ENCODE measurements at regions of chr11 and their contacts with region 1.

Region 1: DNA sequence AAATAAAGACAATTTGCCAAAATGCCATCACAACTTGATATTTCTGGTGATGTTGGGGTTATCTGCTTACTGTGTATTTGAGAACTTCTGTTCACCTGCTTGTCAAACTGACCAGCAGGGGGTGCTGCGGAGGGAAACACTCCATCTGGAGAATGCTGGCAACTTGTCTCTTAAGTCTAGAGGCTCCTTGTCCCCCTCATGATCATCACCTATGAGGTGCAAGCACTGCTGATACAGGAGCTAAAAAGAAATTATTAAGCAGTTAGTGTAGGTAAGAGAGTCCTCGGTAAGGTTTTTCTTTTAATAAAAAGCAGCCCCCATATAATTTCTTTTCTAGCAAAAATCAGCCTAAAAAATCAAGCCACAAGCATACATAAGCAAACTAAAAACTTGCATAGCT is 32.7 kb upstream of the GLYATL1B start:
- DNase-seq: no peak
- ATAC-seq: peak; percentile 84
- H3K4me3 ChIP-seq: no peak overlapping the region
- H3K27ac ChIP-seq: no peak overlapping the region
- H3K4me1 ChIP-seq: peaks cover 4% of the 10 kb centered on the region; the same call in 1 of the 2 replicates
- H3K27me3 ChIP-seq: no peaks in the 10 kb centered on the region
- CTCF ChIP-seq: peak; percentile 47 to 75 (median 63)
- EP300 ChIP-seq: no peak
- POLR2A ChIP-seq: no peak
- RAD21 ChIP-seq: peak; percentile 44; the same call in 1 of the 2 replicates

Region 2: GRCh38 chr11:58654079-58654907 is 399.1 kb before region 1 on chr11:
- CTCF ChIA-PET with region 1: interaction called, 5 read pairs
- POLR2A ChIA-PET with region 1: no interaction called
- RAD21 ChIA-PET with region 1: interaction called, 13 read pairs
- SMC1A ChIA-PET with region 1: interaction called, 3 read pairs
- in situ Hi-C with region 1: no loop called
- intact Hi-C with region 1: loop called (anchors 5 kb)
- DNase-seq: peak; percentile 38
- ATAC-seq: peak; percentile 98
- H3K4me3 ChIP-seq: no peak overlapping the region
- H3K27ac ChIP-seq: no peak overlapping the region
- H3K4me1 ChIP-seq: peaks cover 4% of the 10 kb centered on the region; the same call in 1 of the 2 replicates
- H3K27me3 ChIP-seq: no peaks in the 10 kb centered on the region
- CTCF ChIP-seq: peak; percentile 89 to 90 (median 89)
- EP300 ChIP-seq: no peak
- POLR2A ChIP-seq: no peak
- RAD21 ChIP-seq: peak; percentile 76

Region 3: DNA sequence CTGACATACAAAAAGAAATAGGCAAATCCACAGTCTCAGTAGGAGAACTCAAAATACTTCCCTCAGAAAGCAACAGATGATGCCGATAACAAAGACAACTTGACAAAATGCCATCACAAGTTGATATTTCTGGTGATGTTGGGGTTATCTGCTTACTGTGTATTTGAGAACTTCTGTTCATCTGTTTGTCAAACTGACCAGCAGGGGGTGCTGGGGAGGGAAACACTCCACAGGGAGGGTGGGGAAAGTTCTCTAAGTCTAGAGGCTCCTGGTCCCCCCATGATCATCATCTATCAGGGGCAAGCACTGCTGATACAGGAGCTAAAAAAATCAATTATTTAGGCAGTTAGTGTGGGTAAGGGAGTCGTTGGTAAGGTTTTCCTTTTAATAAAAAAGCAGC is 94.9 kb before region 1 on chr11:
- CTCF ChIA-PET with region 1: interaction called, 35 read pairs
- POLR2A ChIA-PET with region 1: no interaction called
- RAD21 ChIA-PET with region 1: interaction called, 10 read pairs
- SMC1A ChIA-PET with region 1: interaction called, 4 read pairs
- in situ Hi-C with region 1: no loop called
- intact Hi-C with region 1: loop called (anchors 1 kb)
- DNase-seq: peak; percentile 2
- ATAC-seq: peak; percentile 92
- H3K4me3 ChIP-seq: no peak overlapping the region
- H3K27ac ChIP-seq: no peak overlapping the region
- H3K4me1 ChIP-seq: peaks cover 3% of the 10 kb centered on the region; the same call in 1 of the 2 replicates
- H3K27me3 ChIP-seq: no peaks in the 10 kb centered on the region
- CTCF ChIP-seq: peak; percentile 46 to 60 (median 51)
- EP300 ChIP-seq: no peak
- POLR2A ChIP-seq: no peak
- RAD21 ChIP-seq: peak; percentile 53

Region 4: DNA sequence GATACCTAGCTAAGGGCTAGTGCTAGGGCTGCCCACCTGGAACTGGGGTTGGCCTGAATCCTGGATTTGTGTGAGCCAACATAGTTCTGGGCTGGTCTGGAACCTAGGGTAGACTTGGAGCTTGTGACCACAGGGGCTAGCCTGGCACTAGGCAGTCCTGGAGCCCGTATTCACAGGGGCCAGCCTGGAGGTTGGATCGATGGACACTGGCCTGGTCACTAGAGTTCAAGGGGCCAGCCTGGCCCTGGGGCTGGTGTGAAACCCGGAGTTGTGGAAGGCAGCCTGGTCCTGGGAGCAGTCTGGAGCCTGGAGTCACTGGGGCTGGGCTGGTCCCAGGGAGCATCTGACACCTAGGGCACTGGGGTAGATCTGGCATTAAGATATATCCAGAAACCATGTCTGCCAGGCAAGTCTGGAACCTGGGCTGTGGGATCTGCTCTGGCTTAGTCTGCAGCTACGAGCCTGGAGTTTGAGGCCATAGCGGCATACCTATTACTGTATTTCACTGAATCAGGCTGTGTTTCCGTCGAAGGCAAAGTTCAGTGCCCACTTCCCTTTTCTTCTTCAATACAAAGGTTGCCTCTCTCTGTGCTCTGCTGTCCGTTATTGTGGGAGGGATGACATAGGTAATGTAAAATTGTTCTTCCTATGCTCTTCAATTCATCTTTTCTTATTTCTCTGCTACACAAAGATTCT is 23.6 kb after region 1 on chr11:
- CTCF ChIA-PET with region 1: interaction called, 10 read pairs
- POLR2A ChIA-PET with region 1: no interaction called
- RAD21 ChIA-PET with region 1: interaction called, 4 read pairs
- SMC1A ChIA-PET with region 1: interaction called, 7 read pairs
- in situ Hi-C with region 1: no loop called
- intact Hi-C with region 1: no loop called
- DNase-seq: no peak
- ATAC-seq: peak; percentile 97
- H3K4me3 ChIP-seq: no peak overlapping the region
- H3K27ac ChIP-seq: no peak overlapping the region
- H3K4me1 ChIP-seq: peaks cover 27% of the 10 kb centered on the region
- H3K27me3 ChIP-seq: no peaks in the 10 kb centered on the region
- CTCF ChIP-seq: no peak
- EP300 ChIP-seq: no peak
- POLR2A ChIP-seq: no peak
- RAD21 ChIP-seq: no peak

Region 5: GRCh38 chr11:59115553-59115952 is 62.2 kb after region 1 on chr11:
- CTCF ChIA-PET with region 1: interaction called, 48 read pairs
- POLR2A ChIA-PET with region 1: interaction called, 4 read pairs
- RAD21 ChIA-PET with region 1: interaction called, 4 read pairs
- SMC1A ChIA-PET with region 1: interaction called, 4 read pairs
- in situ Hi-C with region 1: no loop called
- intact Hi-C with region 1: no loop called
- DNase-seq: no peak
- ATAC-seq: peak; percentile 9; the same call in 1 of the 3 replicates
- H3K4me3 ChIP-seq: no peak overlapping the region
- H3K27ac ChIP-seq: no peak overlapping the region
- H3K4me1 ChIP-seq: no peaks in the 10 kb centered on the region
- H3K27me3 ChIP-seq: no peaks in the 10 kb centered on the region
- CTCF ChIP-seq: no peak
- EP300 ChIP-seq: no peak
- POLR2A ChIP-seq: no peak
- RAD21 ChIP-seq: no peak

Region 6: GRCh38 chr11:59849129-59849528 is 795.7 kb after region 1 on chr11:
- CTCF ChIA-PET with region 1: no interaction called
- POLR2A ChIA-PET with region 1: no interaction called
- RAD21 ChIA-PET with region 1: no interaction called
- SMC1A ChIA-PET with region 1: no interaction called
- in situ Hi-C with region 1: no loop called
- intact Hi-C with region 1: no loop called
- DNase-seq: no peak
- ATAC-seq: no peak
- H3K4me3 ChIP-seq: no peak overlapping the region
- H3K27ac ChIP-seq: no peak overlapping the region
- H3K4me1 ChIP-seq: no peaks in the 10 kb centered on the region
- H3K27me3 ChIP-seq: no peaks in the 10 kb centered on the region; a peak in 1 of 4 replicates
- CTCF ChIP-seq: no peak
- EP300 ChIP-seq: no peak
- POLR2A ChIP-seq: no peak
- RAD21 ChIP-seq: no peak

Region 7: DNA sequence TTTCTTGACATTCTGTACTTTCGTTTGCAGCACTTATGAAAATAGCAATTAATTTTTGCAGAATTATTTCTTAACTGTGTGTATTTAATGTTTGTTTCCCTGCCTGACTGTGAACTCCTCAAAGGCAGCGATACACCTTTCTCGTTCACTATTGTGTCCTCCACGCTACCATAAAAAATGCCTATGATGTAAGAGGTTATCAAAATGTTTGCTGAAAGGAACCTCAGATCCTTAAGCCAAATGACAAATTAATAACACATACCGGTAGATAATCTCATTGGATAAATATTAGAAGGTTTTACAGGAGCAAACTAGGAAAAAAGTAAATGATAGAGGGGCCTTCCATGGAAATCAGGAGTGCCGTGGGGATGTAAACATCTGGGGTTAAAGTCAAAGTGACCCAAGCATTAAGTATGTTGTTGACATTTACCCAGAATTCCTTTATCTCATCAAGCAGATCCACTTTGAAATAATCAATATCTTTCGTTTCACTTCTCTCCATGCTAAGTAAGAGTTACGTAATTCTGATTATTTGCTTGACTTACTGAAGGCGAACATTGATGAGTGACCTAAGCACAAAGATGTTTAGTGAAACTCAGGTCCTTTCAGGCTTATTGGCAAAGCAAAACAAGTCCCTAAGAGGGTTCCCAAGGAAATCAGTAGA is 822.6 kb after region 1 on chr11:
- CTCF ChIA-PET with region 1: no interaction called
- POLR2A ChIA-PET with region 1: no interaction called
- RAD21 ChIA-PET with region 1: no interaction called
- SMC1A ChIA-PET with region 1: no interaction called
- in situ Hi-C with region 1: no loop called
- intact Hi-C with region 1: no loop called
- DNase-seq: no peak
- ATAC-seq: no peak
- H3K4me3 ChIP-seq: no peak overlapping the region
- H3K27ac ChIP-seq: no peak overlapping the region
- H3K4me1 ChIP-seq: no peaks in the 10 kb centered on the region
- H3K27me3 ChIP-seq: no peaks in the 10 kb centered on the region
- CTCF ChIP-seq: no peak
- EP300 ChIP-seq: no peak
- POLR2A ChIP-seq: no peak
- RAD21 ChIP-seq: no peak